Calu3 (cell line): ENCODE measurements at regions of chr2 and their contacts with region 1.

Region 1: DNA sequence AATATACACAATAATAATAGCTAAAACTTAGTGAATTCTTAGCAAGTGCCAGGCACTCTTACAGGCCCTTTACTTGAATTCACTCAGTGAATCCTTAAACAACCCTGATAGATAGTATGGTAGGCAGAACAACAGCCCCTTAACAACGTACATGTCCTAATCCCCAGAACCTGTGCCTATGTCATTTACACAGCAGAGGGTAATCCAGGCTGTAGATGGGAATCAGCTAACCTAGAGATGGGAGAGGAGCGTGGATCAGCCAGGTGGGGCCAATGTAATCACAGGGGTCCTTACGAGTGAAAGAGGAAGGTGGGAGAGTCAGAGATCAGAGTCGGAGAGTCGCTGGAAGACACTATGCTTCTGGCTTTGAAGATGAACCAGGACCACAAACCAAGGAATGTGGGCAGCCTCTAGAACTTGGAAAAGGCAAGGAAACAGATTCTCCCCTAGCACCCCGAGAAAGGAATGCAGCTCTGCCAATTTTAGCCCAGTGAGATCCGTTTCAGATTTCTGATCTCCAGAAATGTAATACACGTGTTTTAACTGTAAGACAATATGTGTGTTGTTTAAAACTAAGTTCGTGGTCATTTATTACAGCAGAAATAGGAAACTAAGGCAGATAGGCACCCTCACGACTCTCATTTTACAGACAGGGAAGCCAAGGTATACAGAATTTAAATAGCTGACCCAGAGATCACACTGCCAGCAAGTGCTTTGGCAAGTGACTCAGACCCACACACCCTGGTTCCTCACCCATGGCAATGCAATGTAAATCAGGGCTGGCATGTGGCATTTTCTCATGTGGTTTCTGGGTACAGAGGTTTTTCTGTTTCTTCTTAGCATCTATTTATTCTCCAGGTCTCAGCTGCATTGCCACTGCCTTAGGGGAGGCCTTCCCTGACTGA is 68.9 kb downstream of the DOCK10 start:
- DNase-seq: peak; percentile 52
- H3K4me3 Mint-ChIP-seq: peak overlapping the region; percentile 48
- H3K27ac Mint-ChIP-seq: peak overlapping the region; percentile 93
- H3K4me1 Mint-ChIP-seq: peaks cover 26% of the 10 kb centered on the region
- H3K27me3 Mint-ChIP-seq: no peaks in the 10 kb centered on the region
- CTCF ChIP-seq: no peak

Region 2: GRCh38 chr2:224885836-224886547 is 87.4 kb before region 1 on chr2:
- CTCF ChIA-PET with region 1: no interaction called
- intact Hi-C with region 1: loop called (anchors 2 kb)
- DNase-seq: no peak
- H3K4me3 Mint-ChIP-seq: no peak overlapping the region
- H3K27ac Mint-ChIP-seq: no peak overlapping the region
- H3K4me1 Mint-ChIP-seq: peaks cover 46% of the 10 kb centered on the region
- H3K27me3 Mint-ChIP-seq: no peaks in the 10 kb centered on the region
- CTCF ChIP-seq: no peak

Region 3: DNA sequence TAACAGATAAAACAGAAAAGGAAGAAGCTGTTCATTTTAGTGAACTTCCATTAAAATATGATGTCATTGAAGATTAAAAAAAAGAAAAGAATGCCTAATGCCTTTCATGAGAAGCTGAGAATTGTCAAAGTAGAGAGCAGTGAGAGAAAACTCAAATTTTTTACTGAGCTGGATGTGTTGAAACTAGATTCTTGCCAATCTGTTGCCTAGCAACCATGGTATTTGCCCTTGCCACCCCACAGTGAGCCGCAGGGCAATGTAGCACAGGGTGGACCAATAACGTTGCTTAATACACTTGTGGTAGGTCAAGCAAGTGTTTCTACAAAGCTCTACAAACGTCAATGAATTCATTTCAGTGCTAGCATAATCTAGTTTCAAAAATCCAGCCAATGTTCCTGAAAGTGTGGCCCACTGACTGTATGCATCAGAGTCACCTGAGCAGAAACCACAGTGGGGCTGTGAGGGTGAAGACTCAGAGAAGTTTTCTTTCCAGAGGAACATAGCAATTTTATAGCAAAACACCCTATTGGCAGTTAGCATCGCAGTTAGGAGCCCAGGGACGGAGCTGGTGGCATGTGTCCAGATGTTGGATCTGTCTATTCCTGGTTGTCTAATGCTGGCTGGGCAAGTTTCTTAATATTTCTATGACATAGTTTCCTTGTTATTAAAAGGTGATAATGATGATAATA is 63.3 kb before region 1 on chr2:
- CTCF ChIA-PET with region 1: no interaction called
- intact Hi-C with region 1: loop called (anchors 5 kb)
- DNase-seq: peak; percentile 76
- H3K4me3 Mint-ChIP-seq: no peak overlapping the region
- H3K27ac Mint-ChIP-seq: peak overlapping the region; percentile 63
- H3K4me1 Mint-ChIP-seq: peaks cover 18% of the 10 kb centered on the region
- H3K27me3 Mint-ChIP-seq: no peaks in the 10 kb centered on the region
- CTCF ChIP-seq: no peak

Region 4: DNA sequence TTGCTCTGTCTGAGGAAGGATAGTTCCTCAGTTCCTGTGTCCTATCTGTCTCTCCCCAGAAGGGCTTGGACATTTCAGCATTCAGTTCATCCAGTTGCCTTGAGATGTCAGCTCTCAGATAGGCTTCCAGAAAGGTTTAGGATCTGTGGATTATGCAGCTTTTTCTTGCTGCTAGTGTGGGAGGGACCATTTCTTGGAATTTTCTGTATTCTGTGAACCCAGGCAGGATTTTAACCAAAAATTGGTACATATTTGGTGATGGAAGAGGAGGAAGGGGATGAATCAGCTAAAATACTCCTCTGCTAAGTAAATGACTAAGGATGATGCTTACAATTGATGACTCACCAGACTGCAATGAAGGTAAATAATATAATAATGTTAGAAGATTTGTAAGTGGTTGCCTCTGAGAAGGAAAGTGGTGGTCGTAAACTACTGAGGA is 127.5 kb after region 1 on chr2:
- CTCF ChIA-PET with region 1: no interaction called
- intact Hi-C with region 1: no loop called
- DNase-seq: no peak
- H3K4me3 Mint-ChIP-seq: no peak overlapping the region
- H3K27ac Mint-ChIP-seq: no peak overlapping the region
- H3K4me1 Mint-ChIP-seq: peaks cover 17% of the 10 kb centered on the region
- H3K27me3 Mint-ChIP-seq: no peaks in the 10 kb centered on the region
- CTCF ChIP-seq: no peak

Region 5: DNA sequence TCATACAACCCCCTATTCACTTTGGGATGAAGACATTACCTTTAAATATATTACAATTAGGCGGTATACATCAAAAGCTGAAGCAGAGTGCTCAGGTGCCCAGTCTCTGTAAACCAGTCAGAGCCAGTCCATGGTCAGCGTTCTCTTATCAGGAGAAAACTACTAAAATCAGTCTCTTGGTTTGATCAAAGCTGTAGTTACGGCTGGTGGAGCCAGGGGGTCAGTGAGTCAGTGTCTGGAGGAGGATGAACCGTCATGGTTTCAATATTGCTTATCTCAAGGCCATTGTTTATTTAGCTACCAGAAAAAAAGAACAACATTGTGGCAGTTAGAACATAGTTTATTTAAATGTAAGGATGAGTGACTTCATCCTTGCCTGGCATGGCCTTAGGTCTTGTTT is 354.8 kb after region 1 on chr2:
- CTCF ChIA-PET with region 1: no interaction called
- intact Hi-C with region 1: no loop called
- DNase-seq: no peak
- H3K4me3 Mint-ChIP-seq: no peak overlapping the region
- H3K27ac Mint-ChIP-seq: no peak overlapping the region
- H3K4me1 Mint-ChIP-seq: no peaks in the 10 kb centered on the region
- H3K27me3 Mint-ChIP-seq: no peaks in the 10 kb centered on the region
- CTCF ChIP-seq: no peak

Region 6: DNA sequence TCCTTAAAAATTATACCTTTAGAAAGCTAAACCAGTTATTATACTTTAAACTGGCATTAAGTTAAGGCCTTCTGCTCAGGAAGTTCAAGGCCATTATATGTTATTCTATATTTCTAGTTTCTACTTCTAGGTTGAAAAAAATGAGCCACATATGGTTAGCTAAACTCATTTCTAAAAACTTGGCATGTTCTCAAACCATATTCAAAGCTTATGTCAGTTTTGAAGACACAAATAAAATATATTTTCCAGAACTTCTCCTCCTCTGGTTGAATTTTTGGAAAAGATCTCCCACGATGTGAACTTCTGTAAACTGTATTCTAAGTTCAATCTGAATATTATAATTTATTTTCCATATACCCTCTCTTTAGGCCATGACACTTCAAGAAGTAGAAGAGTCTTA is 529.6 kb after region 1 on chr2:
- CTCF ChIA-PET with region 1: no interaction called
- intact Hi-C with region 1: no loop called
- DNase-seq: no peak
- H3K4me3 Mint-ChIP-seq: no peak overlapping the region
- H3K27ac Mint-ChIP-seq: no peak overlapping the region
- H3K4me1 Mint-ChIP-seq: no peaks in the 10 kb centered on the region
- H3K27me3 Mint-ChIP-seq: no peaks in the 10 kb centered on the region
- CTCF ChIP-seq: no peak